ENCODE measurements at regions of chr16 and their contacts with region 1.

Region 1: GRCh38 chr16:29815793-29816693 is at the start of gene PAGR1:
- DNase-seq: peak; percentile 98
- ATAC-seq: peak; percentile 75
- H3K4me3 ChIP-seq: peak within 1 kb of the TSS; percentile 86 to 92
- H3K27ac ChIP-seq: peak within 1 kb of the TSS; percentile 97
- H3K4me1 ChIP-seq: peaks cover 59% of the 10 kb centered on the region
- H3K27me3 ChIP-seq: no peaks in the 10 kb centered on the region
- CTCF ChIP-seq: peak; percentile 97
- total RNA-seq, gene PAGR1: 42.5 TPM

Region 2: DNA sequence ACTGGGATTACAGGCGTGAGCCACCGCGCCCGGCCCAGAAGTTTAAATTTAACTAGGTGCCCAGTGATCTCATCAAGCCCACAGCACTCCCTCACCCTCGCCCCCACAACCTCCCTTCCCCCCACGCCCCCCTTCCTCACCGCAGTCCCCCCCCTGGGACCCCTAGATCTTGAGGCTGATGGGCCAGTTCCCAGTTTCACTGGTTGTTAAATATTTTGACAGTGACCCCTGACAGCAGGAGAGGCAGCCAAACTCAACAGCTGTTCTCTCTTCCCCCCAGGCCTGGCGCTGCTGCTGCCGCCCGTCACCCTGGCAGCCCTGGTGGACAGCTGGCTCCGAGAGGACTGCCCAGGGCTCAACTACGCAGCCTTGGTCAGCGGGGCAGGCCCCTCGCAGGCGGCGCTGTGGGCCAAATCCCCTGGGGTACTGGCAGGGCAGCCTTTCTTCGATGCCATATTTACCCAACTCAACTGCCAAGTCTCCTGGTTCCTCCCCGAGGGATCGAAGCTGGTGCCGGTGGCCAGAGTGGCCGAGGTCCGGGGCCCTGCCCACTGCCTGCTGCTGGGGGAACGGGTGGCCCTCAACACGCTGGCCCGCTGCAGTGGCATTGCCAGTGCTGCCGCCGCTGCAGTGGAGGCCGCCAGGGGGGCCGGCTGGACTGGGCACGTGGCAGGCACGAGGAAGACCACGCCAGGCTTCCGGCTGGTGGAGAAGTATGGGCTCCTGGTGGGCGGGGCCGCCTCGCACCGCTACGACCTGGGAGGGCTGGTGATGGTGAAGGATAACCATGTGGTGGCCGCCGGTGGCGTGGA is 121.5 kb before region 1 on chr16:
- CTCF ChIA-PET with region 1: no interaction called
- POLR2A ChIA-PET with region 1: interaction called, 4 read pairs
- in situ Hi-C with region 1: no loop called
- intact Hi-C with region 1: loop called (anchors 10 kb)
- DNase-seq: no peak
- ATAC-seq: no peak
- H3K4me3 ChIP-seq: no peak overlapping the region
- H3K27ac ChIP-seq: no peak overlapping the region
- H3K4me1 ChIP-seq: no peaks in the 10 kb centered on the region
- H3K27me3 ChIP-seq: no peaks in the 10 kb centered on the region
- CTCF ChIP-seq: no peak

Region 3: DNA sequence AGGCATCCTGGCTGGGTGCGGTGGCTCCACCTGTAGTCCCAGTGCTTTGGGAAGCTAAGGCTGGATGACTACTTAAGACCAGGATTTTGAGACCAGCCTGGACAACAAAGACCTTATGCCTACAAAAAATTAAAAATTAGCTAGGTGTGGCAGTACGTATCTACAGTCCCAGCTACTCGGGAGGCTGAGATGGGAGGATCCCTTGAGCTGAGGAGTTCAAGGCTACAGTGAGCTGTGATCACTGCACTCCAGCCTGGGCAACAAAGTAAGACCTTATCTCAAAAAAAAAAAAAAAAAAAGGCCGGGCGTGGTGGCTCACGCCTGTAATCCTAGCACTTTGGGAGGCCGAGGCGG is 10.3 kb after region 1 on chr16:
- CTCF ChIA-PET with region 1: interaction called, 20 read pairs
- POLR2A ChIA-PET with region 1: interaction called, 4 read pairs
- in situ Hi-C with region 1: no loop called
- intact Hi-C with region 1: no loop called
- DNase-seq: no peak
- ATAC-seq: no peak
- H3K4me3 ChIP-seq: no peak overlapping the region
- H3K27ac ChIP-seq: no peak overlapping the region
- H3K4me1 ChIP-seq: peaks cover 29% of the 10 kb centered on the region
- H3K27me3 ChIP-seq: no peaks in the 10 kb centered on the region
- CTCF ChIP-seq: no peak

Region 4: GRCh38 chr16:29891525-29892457 is 75.7 kb after region 1 on chr16:
- CTCF ChIA-PET with region 1: no interaction called
- POLR2A ChIA-PET with region 1: interaction called, 20 read pairs
- in situ Hi-C with region 1: no loop called
- intact Hi-C with region 1: no loop called
- DNase-seq: no peak
- ATAC-seq: no peak
- H3K4me3 ChIP-seq: no peak overlapping the region
- H3K27ac ChIP-seq: no peak overlapping the region
- H3K4me1 ChIP-seq: no peaks in the 10 kb centered on the region
- H3K27me3 ChIP-seq: no peaks in the 10 kb centered on the region
- CTCF ChIP-seq: no peak

Region 5: GRCh38 chr16:30010844-30011713 is 195.0 kb after region 1 on chr16 and contains the start of gene DOC2A:
- CTCF ChIA-PET with region 1: interaction called, 5 read pairs
- POLR2A ChIA-PET with region 1: interaction called, 19 read pairs
- in situ Hi-C with region 1: no loop called
- intact Hi-C with region 1: no loop called
- DNase-seq: no peak
- ATAC-seq: peak; percentile 67
- H3K4me3 ChIP-seq: peak within 1 kb of the TSS; percentile 40 to 51
- H3K27ac ChIP-seq: no peak within 1 kb of the TSS
- H3K4me1 ChIP-seq: no peaks in the 10 kb centered on the region
- H3K27me3 ChIP-seq: no peaks in the 10 kb centered on the region
- CTCF ChIP-seq: no peak
- total RNA-seq, gene DOC2A: 3.2 TPM